ENCODE measurements at regions of chr12 and their contacts with region 1.

Region 1: DNA sequence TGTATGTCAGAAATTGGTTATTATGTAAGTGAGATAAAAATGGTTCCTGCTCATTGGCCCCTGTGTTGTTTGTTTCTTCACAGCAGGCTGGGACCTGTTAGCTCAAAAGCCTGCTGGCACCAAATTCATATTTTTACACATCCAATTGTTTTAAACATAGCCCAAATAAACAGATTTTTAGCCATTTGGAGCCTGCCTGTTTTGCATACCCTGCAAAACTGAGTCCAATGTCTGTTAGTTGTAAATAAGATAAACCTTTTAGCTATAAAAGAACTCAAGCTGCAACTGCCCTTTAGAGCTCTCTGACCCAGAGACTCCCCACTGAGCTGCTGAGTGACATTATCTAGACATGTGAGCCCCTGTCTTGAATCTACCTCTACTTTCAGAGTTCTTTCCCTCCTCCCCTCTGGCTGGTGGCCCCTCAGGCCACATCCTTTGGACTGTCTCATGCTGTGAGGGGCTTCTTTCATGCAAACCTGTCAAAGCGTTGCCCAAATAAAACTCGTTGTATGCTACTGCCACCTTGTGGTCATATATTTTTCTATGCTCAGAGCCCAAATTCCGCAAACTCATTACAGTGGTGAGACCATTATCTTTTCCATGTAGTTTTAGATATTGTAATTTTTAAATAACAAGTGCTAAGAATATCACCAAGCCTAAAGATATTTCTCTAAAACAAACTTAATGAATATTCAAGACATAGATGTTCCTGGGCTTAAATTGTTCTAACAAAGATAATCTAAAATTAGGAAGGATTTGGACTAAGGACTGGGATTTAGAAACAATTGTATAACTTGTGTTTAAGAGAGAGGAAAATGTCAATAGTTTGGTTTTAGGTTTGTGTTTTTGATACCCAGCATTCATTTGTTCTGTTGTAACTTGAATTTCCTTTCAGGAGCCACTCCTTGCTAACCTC is 337.9 kb downstream of the AACS start:
- DNase-seq: no peak
- H3K4me3 Mint-ChIP-seq: no peak overlapping the region
- H3K27ac Mint-ChIP-seq: no peak overlapping the region
- H3K4me1 Mint-ChIP-seq: no peaks in the 10 kb centered on the region
- H3K27me3 Mint-ChIP-seq: peaks cover 8% of the 10 kb centered on the region

Region 2: DNA sequence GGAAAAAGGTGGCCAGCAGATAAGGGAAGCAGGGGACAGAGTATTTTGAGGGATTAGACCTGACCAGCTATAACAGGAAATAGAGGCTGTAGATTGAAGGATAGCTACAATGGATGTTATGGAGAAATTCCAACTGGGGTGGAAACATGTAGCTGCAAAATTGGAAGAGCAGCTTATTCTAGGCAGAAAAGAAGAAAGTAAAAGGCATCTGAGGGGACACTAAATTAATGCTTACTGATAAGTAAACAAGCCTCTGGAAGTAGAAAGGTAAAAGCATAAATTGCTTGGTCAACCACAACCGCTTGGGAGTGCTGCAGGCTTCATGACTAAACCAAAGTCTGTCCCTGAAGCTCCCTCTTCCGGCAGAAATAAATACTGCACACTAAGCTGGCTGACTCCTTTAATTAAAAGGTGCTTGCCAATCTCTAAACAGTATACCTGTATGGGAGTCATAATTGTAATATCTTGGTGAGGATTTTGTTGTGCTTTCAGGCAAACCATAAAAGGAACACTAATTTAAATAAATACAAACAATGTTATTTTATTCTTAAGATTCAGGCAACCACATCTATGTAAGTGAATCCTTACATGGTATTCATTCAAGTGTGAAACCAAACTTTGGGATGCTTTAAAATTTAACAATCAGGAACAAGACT is 496.4 kb before region 1 on chr12:
- CTCF ChIA-PET with region 1: no interaction called
- intact Hi-C with region 1: loop called (anchors 2 kb)
- DNase-seq: peak; percentile 98
- H3K4me3 Mint-ChIP-seq: no peak overlapping the region
- H3K27ac Mint-ChIP-seq: peak overlapping the region; percentile 12
- H3K4me1 Mint-ChIP-seq: peaks cover 19% of the 10 kb centered on the region
- H3K27me3 Mint-ChIP-seq: no peaks in the 10 kb centered on the region

Region 3: DNA sequence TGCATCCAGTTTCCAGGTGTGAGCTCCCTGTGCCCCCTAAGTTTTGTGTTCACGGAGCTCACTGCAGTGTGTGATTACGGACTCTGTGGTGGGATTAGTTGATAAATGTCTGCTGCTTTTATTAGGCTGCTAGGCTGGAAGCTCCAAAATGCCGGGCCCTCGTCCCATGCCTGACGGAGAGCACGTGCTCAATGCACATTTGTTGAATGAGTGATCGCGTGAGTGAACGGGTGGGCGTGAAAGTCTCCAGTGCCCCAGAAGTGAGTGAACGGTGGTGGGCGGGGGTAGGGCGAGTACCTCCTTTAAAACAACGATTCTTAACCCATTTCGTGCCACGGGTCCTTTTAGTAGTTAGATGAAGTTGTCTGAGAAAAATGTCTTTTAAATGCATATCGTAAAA is 162.4 kb before region 1 on chr12:
- CTCF ChIA-PET with region 1: interaction called, 4 read pairs
- intact Hi-C with region 1: loop called (anchors 2 kb)
- DNase-seq: no peak
- H3K4me3 Mint-ChIP-seq: no peak overlapping the region
- H3K27ac Mint-ChIP-seq: no peak overlapping the region
- H3K4me1 Mint-ChIP-seq: no peaks in the 10 kb centered on the region
- H3K27me3 Mint-ChIP-seq: peaks cover 16% of the 10 kb centered on the region

Region 4: GRCh38 chr12:125330645-125331341 is 72.3 kb before region 1 on chr12:
- CTCF ChIA-PET with region 1: interaction called, 6 read pairs
- intact Hi-C with region 1: loop called (anchors 1 kb)
- DNase-seq: peak; percentile 56
- H3K4me3 Mint-ChIP-seq: no peak overlapping the region
- H3K27ac Mint-ChIP-seq: no peak overlapping the region
- H3K4me1 Mint-ChIP-seq: no peaks in the 10 kb centered on the region
- H3K27me3 Mint-ChIP-seq: peaks cover 22% of the 10 kb centered on the region

Region 5: GRCh38 chr12:125742413-125742812 is 339.3 kb after region 1 on chr12:
- CTCF ChIA-PET with region 1: no interaction called
- intact Hi-C with region 1: no loop called
- DNase-seq: no peak
- H3K4me3 Mint-ChIP-seq: no peak overlapping the region
- H3K27ac Mint-ChIP-seq: no peak overlapping the region
- H3K4me1 Mint-ChIP-seq: no peaks in the 10 kb centered on the region
- H3K27me3 Mint-ChIP-seq: no peaks in the 10 kb centered on the region

Measured in activated naive CD4-positive, alpha-beta T cell treated with anti-CD3 and anti-CD28 coated beads for 36 hours (primary cell).